Transverse colon (tissue), 4 donors: ENCODE measurements at regions of chr22 and their contacts with region 1.

Region 1: DNA sequence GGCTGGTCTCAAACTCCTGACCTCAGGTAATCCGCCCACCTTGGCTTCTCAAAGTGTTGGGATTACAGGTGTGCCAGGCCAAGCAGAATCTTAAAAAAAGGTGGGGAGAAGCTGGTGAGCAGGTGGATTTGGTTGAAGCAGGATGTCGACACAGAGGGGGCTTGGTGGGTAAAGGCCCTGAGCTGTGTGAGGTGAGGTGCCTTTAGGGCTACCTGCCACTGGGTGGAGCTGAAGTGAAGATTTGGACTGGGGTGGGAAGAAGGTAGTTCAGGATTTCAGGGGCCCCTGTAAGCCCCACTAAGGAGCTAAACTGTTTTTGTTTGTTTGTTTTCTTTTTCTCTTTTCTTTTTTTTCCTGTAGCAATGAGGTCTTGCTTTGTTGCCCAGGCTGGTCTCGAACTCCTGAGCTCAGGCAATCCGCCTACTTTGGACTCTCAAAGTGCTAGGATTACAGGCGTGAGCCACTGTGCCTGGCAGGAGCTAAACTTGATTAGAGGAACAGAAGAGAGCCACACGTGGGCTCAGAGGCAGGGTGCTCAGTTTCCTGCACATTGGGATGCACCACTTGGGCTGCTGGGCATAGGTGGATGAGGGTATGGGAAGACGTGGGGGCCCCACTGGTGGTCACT is 6.0 kb downstream of the P2RX6 start:
- DNase-seq: no peak
- H3K4me3 ChIP-seq: no peak overlapping the region
- H3K27ac ChIP-seq: no peak overlapping the region
- H3K4me1 ChIP-seq: peaks cover 0 to 3% (median 0%) of the 10 kb centered on the region in 4 donors
- H3K27me3 ChIP-seq: no peaks in the 10 kb centered on the region
- CTCF ChIP-seq: peak in 2 of 5 experiments; percentile 11 to 22
- EP300 ChIP-seq: no peak
- POLR2A ChIP-seq: no peak

Region 2: DNA sequence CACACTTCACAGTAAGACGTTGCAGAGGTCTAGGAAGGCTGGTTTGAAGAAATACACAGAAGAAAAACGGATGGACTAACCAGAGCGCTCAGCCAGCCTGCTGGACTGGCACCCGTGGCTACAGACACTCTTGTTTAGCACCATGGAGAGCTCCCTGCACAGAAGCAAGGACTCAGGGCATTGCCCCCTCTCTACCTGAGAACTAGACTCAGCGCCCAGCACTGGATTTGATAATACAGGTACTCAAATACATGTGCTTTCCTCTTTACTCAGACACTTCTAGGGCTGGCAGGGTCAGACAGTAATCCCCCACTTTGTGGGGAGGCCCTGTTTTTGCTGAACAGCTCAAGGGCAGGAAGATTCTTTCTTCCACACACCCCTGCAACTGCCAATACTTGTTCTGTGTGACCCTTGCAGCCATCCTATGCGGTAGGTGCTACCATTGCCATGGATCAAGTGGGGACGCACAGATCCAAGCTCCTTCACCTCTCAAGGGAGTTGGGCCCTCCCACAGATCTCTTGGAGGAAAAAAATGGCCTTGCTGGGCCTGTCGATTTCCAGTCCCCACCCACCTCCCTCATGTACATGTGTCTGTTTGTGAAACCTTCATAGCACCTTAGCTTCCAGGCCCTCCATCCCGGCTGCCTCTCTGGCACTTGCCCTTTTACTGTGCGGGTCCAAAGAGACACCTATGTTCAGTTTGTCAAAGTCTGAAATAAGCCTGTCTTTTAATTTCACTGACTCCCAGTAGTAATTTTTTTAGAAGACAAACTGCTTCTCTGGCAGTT is 11.1 kb before region 1 on chr22:
- in situ Hi-C with region 1: no loop called
- intact Hi-C with region 1: loop called (anchors 1 kb)
- DNase-seq: peak; percentile 35
- H3K4me3 ChIP-seq: no peak overlapping the region
- H3K27ac ChIP-seq: no peak overlapping the region
- H3K4me1 ChIP-seq: peaks cover 5 to 13% (median 12%) of the 10 kb centered on the region in 4 donors
- H3K27me3 ChIP-seq: no peaks in the 10 kb centered on the region
- CTCF ChIP-seq: no peak
- EP300 ChIP-seq: no peak
- POLR2A ChIP-seq: no peak

Region 3: GRCh38 chr22:21074188-21074724 is 53.3 kb after region 1 on chr22:
- in situ Hi-C with region 1: no loop called
- intact Hi-C with region 1: loop called (anchors 10 kb)
- DNase-seq: no peak
- H3K4me3 ChIP-seq: no peak overlapping the region
- H3K27ac ChIP-seq: no peak overlapping the region
- H3K4me1 ChIP-seq: no peaks in the 10 kb centered on the region
- H3K27me3 ChIP-seq: no peaks in the 10 kb centered on the region
- CTCF ChIP-seq: no peak
- EP300 ChIP-seq: no peak
- POLR2A ChIP-seq: no peak